ENCODE measurements at regions of chr9 and their contacts with region 1.

Region 1: DNA sequence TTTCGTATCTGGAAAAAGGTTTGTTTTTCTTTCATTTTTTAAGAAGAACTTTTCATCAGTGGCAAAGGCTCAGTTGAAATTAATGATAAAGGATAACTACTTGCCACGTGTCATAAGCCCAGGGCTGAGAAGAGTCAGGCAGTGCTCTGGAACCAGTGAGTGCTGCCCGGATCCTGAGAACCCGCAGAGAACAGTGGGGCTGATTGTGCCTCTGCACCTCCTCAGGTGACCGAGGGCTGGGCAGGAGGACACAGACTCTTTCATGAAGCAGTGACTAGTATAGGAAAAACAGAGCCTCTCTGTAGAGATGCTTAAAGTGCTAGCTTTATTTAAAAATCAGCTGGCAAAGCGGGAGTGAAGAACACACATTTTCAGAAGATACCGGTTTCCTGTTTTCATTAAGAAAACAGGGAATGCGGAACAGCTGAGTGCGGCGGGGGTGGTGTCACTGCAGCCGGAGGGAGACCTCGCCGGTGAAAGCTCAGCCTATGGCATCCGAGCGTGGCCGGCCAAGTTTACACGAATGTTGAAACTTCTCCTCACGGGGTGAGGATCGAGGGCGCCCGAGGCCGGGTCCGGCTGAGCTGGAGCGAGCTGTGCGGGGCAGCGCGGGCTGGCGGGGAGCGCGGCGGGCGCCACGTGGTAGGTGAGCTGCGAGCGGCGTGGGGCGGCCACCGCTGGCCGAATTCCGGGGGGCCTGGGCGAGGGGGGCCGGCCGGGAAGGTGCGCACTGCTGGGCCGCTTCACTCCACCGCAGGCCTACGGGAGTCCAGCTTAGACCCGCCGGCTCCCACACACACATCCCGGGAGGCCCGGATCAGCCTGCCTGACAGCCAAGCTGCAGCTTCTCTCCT is 134.7 kb upstream of the DMRT1 start:
- DNase-seq: no peak
- H3K4me3 ChIP-seq: peak overlapping the region; percentile 59
- CTCF ChIP-seq: no peak

Region 2: DNA sequence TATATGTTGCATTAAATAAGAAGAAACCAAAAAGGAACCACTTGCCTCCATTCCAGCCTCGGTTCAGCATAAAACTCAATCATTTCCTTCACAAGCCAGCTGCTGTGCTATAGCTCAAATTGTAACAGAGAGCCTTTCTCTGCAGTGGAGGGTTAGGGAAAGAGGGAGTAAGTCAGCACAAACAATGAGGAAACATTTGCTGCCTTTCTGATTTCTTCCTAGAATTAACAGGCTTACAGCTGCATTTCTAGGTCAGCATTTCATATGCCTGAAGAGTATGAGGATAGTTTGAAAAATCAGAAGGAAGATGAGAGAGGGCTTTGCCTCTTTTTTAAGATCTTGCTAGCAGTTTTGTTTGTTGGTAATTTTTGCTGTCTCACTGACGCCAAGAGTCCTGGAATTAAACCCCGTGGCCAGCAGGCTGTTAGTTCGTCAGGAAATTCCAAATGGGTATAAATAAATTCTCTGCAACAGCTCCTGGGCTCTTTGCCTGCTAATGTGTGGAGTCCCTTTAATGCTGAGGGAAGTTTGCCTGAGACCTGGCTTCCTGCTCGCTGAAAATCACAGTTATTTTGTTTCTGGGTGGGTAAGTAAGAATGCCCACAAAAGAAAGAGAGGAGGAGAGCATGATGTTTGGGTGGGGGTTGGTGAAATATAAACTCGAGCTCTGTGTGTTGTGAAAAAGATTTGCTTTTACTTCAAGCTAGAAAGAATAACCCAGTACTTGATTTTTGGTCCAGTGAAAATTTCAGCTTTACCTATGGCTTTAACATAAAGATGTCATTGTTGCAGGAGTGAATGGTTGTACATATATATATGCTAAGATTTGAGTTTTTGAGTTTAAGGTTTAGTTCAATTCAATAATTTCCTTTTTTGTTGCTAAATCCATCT is 13.4 kb before region 1 on chr9:
- CTCF ChIA-PET with region 1: interaction called, 11 read pairs
- POLR2A ChIA-PET with region 1: interaction called, 11 read pairs
- DNase-seq: peak; percentile 63
- H3K4me3 ChIP-seq: peak overlapping the region; percentile 37
- CTCF ChIP-seq: no peak